Activated naive CD8-positive, alpha-beta T cell treated with anti-CD3 and anti-CD28 coated beads, Interleukin-2, amount 10 ng/mL, durations not matched to agents 7 days and 5 days (primary cell): ENCODE measurements at regions of chr11 and their contacts with region 1.

Region 1: DNA sequence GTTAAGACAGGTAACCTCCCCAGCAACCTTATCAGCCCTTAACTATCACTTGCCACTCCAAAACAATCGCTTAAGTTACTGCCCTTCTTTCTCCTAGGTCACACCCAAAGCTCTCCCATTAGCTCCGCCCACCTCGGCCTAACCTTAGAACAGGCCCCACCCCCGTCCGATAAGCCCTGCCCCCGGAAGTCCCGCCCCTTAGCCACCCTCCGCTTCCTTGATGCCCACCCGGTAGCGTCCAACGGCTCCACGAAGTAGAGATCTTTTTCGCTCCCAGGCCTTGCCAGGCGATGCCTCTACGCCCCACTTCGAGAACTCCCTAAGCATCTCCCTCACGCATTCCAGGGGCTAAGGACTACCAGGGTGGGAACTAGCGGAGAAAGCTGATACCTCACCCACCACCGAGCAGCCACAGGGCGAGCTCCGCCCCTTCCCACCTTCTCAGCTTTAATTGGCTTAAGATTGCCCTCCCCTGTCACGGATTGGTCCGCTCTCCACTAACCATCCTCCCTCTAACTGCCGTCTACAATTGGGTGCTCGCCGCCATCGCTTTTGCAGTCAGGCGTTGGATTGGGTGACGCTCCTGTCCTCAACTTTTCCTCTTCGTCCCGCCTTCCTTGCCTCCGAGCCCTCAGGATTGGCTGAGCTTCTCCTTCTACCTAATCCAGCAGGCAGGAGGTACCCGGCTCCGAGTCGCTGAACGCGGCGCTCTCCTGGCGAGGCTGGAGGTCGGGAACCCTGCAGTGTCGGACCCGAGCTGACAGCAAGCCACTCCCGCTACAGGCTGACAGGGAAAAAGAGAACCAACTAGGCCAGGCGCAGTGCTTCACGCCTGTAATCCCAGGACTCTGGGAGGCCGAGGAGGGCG is at the start of gene ZBTB3:
- DNase-seq: peak; percentile 95
- ATAC-seq: peak; percentile 99
- H3K4me3 Mint-ChIP-seq: peak within 1 kb of the TSS; percentile 96
- H3K27ac Mint-ChIP-seq: peak within 1 kb of the TSS; percentile 98
- H3K4me1 Mint-ChIP-seq: peaks cover 26% of the 10 kb centered on the region
- H3K27me3 Mint-ChIP-seq: peaks cover 4% of the 10 kb centered on the region
- total RNA-seq, gene ZBTB3: 14.0 to 17.1 TPM

Region 2: GRCh38 chr11:62771144-62772021 is 17.4 kb after region 1 on chr11 and contains the start of gene TAF6L:
- POLR2A ChIA-PET with region 1: interaction called, 28 read pairs
- DNase-seq: peak; percentile 95
- ATAC-seq: peak; percentile 83
- H3K4me3 Mint-ChIP-seq: peak within 1 kb of the TSS; percentile 92
- H3K27ac Mint-ChIP-seq: peak within 1 kb of the TSS; percentile 94
- H3K4me1 Mint-ChIP-seq: peaks cover 13% of the 10 kb centered on the region
- H3K27me3 Mint-ChIP-seq: no peaks in the 10 kb centered on the region
- total RNA-seq, gene TAF6L: 20.6 to 22.2 TPM